Activated B cell treated with CpG ODN at 0.5 μM for 24 hours (primary cell): ENCODE measurements at regions of chr17 and their contacts with region 1.

Region 1: GRCh38 chr17:44123356-44124117 is at the start of gene HDAC5:
- DNase-seq: peak; percentile 95
- ATAC-seq: peak; percentile 96
- H3K4me3 Mint-ChIP-seq: peak within 1 kb of the TSS; percentile 95
- H3K27ac Mint-ChIP-seq: peak within 1 kb of the TSS; percentile 97
- H3K4me1 Mint-ChIP-seq: peaks cover 49% of the 10 kb centered on the region
- H3K27me3 Mint-ChIP-seq: no peaks in the 10 kb centered on the region
- CTCF ChIP-seq: no peak
- total RNA-seq, gene HDAC5: 28.4 and 35.1 TPM in 2 replicates

Region 2: DNA sequence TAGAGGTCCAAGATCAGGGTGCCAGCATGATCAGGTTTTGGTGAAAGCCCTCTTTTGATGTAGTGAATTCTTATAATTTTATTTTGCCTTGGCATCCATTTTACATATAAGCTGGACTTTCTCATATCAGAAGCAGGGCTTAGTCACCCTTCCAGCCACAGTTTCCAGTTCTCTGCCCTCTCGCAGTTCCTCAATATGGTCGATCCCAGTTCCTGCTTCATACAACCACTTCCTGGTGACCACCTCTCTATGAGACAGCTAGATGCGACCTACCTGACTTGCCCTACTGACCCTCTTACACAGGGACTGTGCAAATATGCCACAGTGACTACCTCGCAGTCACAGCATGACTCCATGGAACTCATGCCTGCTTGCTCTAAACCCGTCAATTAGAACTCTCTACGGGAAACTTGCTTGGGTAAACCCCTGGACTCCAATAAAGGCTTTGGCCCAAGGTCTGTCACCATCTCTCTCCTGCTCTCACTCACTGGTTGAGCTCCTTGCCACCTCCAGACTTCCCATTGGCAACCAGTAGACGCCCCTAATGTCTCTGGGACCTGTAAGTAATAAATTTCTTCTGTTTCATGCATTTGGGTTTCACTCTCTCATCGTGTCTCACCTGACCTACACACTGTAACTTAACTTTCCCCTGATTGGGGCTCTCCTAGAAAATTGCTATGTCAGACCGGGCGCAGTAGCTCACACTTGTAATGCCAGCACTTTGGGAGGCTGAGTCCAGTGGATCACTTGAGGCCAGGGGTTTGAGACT is 255.1 kb before region 1 on chr17:
- CTCF ChIA-PET with region 1: no interaction called
- POLR2A ChIA-PET with region 1: no interaction called
- intact Hi-C with region 1: no loop called
- DNase-seq: no peak
- ATAC-seq: no peak
- H3K4me3 Mint-ChIP-seq: no peak overlapping the region
- H3K27ac Mint-ChIP-seq: no peak overlapping the region
- H3K4me1 Mint-ChIP-seq: no peaks in the 10 kb centered on the region
- H3K27me3 Mint-ChIP-seq: peaks cover 13% of the 10 kb centered on the region
- CTCF ChIP-seq: no peak

Region 3: GRCh38 chr17:43946069-43946696 is 177.4 kb before region 1 on chr17:
- CTCF ChIA-PET with region 1: no interaction called
- POLR2A ChIA-PET with region 1: no interaction called
- intact Hi-C with region 1: no loop called
- DNase-seq: no peak
- ATAC-seq: no peak
- H3K4me3 Mint-ChIP-seq: no peak overlapping the region
- H3K27ac Mint-ChIP-seq: no peak overlapping the region
- H3K4me1 Mint-ChIP-seq: no peaks in the 10 kb centered on the region
- H3K27me3 Mint-ChIP-seq: peaks cover 28% of the 10 kb centered on the region
- CTCF ChIP-seq: no peak

Region 4: DNA sequence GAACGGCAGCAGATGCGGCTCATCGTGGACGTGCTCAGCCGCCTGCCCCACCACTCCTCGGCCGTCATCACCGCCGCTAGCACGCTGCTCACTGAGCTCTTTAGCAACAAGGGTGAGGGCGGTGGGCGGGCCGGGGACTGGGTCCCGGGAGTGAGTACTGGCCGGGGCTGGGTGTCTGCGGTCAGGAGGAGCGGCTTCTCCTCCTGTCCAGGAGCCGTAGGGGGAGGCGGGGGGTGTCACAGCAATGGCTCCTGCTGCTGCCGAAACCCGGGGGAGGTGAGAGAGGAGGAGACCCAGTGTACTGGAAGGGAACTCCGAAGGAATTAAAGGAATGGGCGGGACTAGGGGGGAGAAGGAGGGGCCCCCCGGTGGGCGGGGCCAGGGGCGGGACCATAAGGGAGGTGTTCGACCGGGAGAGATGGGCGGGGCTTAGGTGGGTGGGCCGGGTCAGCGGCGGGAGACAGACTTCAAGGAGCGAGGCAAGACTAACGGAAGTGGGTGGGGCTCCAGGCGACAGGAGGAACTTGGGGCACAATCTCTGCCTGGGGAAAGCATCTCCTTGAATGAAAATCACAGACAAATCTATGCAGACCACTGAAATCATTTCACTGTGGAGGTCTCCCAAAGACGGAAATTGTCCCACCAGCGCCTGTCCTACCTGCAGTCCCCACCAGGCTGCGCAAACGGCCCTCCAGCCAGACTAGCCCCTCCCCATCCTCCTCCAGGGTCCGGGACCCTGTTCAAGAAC is 116.8 kb before region 1 on chr17:
- CTCF ChIA-PET with region 1: no interaction called
- POLR2A ChIA-PET with region 1: no interaction called
- intact Hi-C with region 1: loop called (anchors 5 kb)
- DNase-seq: peak; percentile 88
- ATAC-seq: peak; percentile 91
- H3K4me3 Mint-ChIP-seq: peak overlapping the region; percentile 90
- H3K27ac Mint-ChIP-seq: peak overlapping the region; percentile 76
- H3K4me1 Mint-ChIP-seq: peaks cover 24% of the 10 kb centered on the region
- H3K27me3 Mint-ChIP-seq: peaks cover 12% of the 10 kb centered on the region
- CTCF ChIP-seq: no peak

Region 5: DNA sequence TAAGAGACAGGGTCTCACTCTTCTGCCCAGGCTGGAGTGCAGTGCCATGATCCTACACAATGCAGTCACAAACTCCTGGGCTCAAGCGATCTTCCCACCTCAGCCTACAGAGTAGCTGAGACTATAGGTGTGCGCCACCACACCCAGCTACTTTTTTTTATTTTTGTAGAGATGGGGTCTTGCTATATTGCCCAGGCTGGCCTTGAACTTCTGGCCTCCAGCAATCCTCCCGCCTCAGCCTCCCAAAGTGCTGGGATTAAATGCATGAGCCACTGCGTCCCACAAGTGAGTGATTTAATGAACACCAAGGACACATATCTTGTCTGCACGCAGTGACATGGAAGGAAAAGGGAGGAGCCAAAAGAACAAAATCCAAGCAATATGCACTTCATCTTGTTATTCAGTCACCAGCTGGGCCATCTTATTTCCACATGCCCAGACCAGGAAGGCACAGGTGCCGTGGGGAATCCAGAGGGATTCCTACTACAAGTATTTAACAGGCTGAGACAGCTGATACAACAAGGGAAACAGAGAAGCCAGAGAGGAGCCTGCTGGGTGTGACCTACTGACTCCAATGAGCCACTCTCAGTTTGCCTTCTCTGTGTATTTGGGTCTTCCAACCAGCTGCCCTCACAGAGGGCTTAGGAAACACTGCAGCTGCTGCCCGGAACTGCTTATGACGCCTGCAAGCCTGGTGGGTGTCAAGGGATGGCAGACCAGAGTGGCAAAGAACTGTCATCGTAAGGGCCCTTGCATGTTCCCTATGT is 74.1 kb before region 1 on chr17:
- CTCF ChIA-PET with region 1: no interaction called
- POLR2A ChIA-PET with region 1: no interaction called
- intact Hi-C with region 1: no loop called
- DNase-seq: no peak
- ATAC-seq: no peak
- H3K4me3 Mint-ChIP-seq: no peak overlapping the region
- H3K27ac Mint-ChIP-seq: no peak overlapping the region
- H3K4me1 Mint-ChIP-seq: peaks cover 3% of the 10 kb centered on the region
- H3K27me3 Mint-ChIP-seq: no peaks in the 10 kb centered on the region
- CTCF ChIP-seq: no peak

Region 6: DNA sequence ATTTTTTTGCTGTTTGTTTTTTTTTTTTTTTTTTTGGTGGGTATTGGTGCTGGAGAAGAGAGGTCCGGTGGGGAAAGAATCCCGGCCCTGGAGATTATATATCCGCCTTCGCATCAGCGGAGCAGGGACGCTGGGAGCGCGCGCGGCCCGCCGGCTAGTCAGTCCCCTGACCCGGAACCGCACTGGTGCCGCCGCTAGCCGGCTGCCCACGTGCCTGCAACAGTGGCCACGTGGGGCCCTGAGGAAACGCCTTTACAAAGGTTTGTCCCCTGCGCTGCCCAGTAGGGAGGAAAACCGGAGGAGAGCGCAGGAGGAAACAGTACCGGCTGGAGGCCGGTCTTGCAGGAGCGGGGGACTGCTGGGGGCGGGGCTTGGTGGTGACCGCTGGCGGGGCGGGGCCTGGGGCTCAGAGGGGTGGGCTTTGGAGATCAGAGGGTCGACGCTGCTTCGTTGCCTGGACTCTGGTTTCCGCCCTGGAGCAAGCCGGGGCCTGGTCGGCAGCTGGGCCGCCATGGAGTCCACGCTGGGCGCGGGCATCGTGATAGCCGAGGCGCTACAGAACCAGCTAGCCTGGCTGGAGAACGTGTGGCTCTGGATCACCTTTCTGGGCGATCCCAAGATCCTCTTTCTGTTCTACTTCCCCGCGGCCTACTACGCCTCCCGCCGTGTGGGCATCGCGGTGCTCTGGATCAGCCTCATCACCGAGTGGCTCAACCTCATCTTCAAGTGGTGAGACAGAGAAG is 52.9 kb before region 1 on chr17 and contains the start of gene G6PC3:
- CTCF ChIA-PET with region 1: no interaction called
- POLR2A ChIA-PET with region 1: interaction called, 30 read pairs
- intact Hi-C with region 1: loop called (anchors 1 kb)
- DNase-seq: peak; percentile 73
- ATAC-seq: peak; percentile 73
- H3K4me3 Mint-ChIP-seq: peak within 1 kb of the TSS; percentile 97
- H3K27ac Mint-ChIP-seq: peak within 1 kb of the TSS; percentile 95
- H3K4me1 Mint-ChIP-seq: peaks cover 44% of the 10 kb centered on the region
- H3K27me3 Mint-ChIP-seq: no peaks in the 10 kb centered on the region
- CTCF ChIP-seq: no peak
- total RNA-seq, gene G6PC3: 30.9 and 35.2 TPM in 2 replicates

Region 7: GRCh38 chr17:44110823-44111633 is 12.5 kb before region 1 on chr17:
- CTCF ChIA-PET with region 1: no interaction called
- POLR2A ChIA-PET with region 1: interaction called, 18 read pairs
- intact Hi-C with region 1: no loop called
- DNase-seq: peak; percentile 55
- ATAC-seq: peak; percentile 85
- H3K4me3 Mint-ChIP-seq: peak overlapping the region; percentile 44
- H3K27ac Mint-ChIP-seq: no peak overlapping the region
- H3K4me1 Mint-ChIP-seq: peaks cover 40% of the 10 kb centered on the region
- H3K27me3 Mint-ChIP-seq: no peaks in the 10 kb centered on the region
- CTCF ChIP-seq: no peak

Region 8: GRCh38 chr17:44141717-44142285 is 18.3 kb after region 1 on chr17 and contains the start of gene HROB:
- CTCF ChIA-PET with region 1: interaction called, 7 read pairs
- POLR2A ChIA-PET with region 1: interaction called, 11 read pairs
- intact Hi-C with region 1: loop called (anchors 1 kb)
- DNase-seq: peak; percentile 96
- ATAC-seq: peak; percentile 98
- H3K4me3 Mint-ChIP-seq: peak within 1 kb of the TSS; percentile 84
- H3K27ac Mint-ChIP-seq: peak within 1 kb of the TSS; percentile 70
- H3K4me1 Mint-ChIP-seq: peaks cover 15% of the 10 kb centered on the region
- H3K27me3 Mint-ChIP-seq: peaks cover 8% of the 10 kb centered on the region
- CTCF ChIP-seq: no peak
- total RNA-seq, gene HROB: 2.2 and 5.0 TPM in 2 replicates

Region 9: DNA sequence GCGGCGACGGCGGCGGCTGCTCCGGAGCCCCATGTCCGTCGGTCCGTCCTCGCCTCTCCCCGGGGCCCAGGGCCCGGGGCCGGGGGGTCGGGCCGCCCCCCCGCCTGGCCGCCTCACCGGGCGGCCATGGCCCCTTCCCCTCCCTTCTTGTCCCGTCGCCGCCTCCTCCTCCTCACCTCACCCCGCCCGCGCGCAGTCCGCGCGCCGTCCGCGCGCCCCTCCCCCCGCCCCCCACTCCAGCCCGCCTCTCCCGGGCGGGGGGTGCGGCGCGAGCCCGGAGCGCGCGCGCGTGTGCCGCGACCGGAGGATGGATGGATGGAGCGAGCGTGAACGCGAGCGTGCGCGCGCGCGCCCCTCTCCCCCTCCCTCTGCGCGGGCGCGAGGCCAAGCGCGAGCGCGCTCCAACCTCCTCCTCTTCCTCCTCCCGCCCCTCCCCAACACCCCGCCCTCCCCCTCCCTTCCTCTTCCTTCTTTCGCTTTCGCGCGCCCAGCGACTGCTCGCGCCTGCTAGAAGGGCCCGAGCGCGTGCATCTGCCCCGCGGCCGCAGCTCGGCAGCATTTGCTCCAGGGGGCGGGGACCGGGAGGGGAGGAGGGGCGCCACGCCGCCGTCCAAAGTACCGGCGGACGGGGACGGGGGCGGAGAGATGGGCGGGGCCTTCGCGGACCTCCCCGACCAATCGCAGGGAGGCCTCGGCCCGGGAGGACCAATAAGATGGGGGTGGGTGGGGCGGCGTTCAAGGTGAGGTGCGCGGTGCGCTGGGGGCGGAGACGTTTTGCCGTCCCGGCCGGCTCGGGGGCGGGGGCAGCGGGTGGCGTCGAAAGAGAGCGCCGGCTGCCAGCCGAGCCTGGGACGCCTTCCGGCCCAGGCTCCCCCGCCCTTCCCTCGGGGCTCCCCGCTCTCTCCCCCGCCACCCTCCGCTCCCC is 76.3 kb after region 1 on chr17 and contains the start of gene ATXN7L3:
- CTCF ChIA-PET with region 1: no interaction called
- POLR2A ChIA-PET with region 1: interaction called, 16 read pairs
- intact Hi-C with region 1: loop called (anchors 1 kb)
- DNase-seq: peak; percentile 95
- ATAC-seq: peak; percentile 85
- H3K4me3 Mint-ChIP-seq: peak within 1 kb of the TSS; percentile 91
- H3K27ac Mint-ChIP-seq: peak within 1 kb of the TSS; percentile 92
- H3K4me1 Mint-ChIP-seq: peaks cover 39% of the 10 kb centered on the region
- H3K27me3 Mint-ChIP-seq: no peaks in the 10 kb centered on the region
- CTCF ChIP-seq: no peak
- total RNA-seq, gene ATXN7L3: 92.0 and 103 TPM in 2 replicates

Region 10: GRCh38 chr17:44503147-44504029 is 379.9 kb after region 1 on chr17 and contains the start of gene GPATCH8:
- CTCF ChIA-PET with region 1: no interaction called
- POLR2A ChIA-PET with region 1: no interaction called
- intact Hi-C with region 1: loop called (anchors 5 kb)
- DNase-seq: peak; percentile 96
- ATAC-seq: peak; percentile 90
- H3K4me3 Mint-ChIP-seq: peak within 1 kb of the TSS; percentile 98
- H3K27ac Mint-ChIP-seq: peak within 1 kb of the TSS; percentile 95
- H3K4me1 Mint-ChIP-seq: peaks cover 38% of the 10 kb centered on the region
- H3K27me3 Mint-ChIP-seq: peaks cover 7% of the 10 kb centered on the region
- CTCF ChIP-seq: no peak
- total RNA-seq, gene GPATCH8: 62.2 and 64.5 TPM in 2 replicates